Activated naive CD4-positive, alpha-beta T cell treated with anti-CD3 and anti-CD28 coated beads for 36 hours (primary cell): ENCODE measurements at regions of chr12 and their contacts with region 1.

Region 1: DNA sequence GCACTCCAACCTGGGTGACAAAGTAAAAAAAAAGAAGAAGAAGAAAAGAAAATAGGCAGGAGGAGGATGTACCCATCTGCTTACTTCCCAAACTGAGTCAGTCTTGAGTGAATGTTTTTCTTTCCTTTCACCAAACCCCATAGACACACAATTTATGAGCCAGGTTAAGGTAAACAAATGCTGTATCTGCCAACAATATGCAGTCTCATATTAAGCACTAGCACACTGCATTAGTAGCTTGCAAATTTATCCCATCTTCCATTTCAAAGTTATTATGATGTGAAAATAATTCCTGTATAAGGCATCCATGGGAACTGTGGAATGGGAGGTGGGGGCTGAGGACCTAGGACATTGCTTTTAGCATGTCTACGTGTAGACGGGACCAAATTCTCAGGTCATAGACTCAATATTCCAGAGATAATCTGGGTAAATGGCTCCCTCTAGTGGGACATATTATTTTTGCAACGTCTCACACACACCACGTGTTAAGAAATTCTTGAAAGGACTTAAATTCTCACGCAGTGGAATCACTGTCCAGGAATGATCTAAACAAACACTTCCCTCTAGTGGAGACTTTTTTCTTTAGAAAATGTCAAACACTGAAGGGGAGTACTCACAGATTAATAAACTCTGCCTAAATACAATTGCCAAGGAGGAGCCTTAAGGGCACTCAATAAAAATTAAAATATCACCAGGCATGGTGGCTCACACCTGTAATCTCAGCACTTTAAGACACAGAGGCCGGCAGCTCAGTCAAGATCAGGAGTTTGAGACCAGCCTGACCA is 17.1 kb upstream of the OR10P1 start:
- DNase-seq: peak; percentile 62
- H3K4me3 Mint-ChIP-seq: no peak overlapping the region
- H3K27ac Mint-ChIP-seq: no peak overlapping the region
- H3K4me1 Mint-ChIP-seq: peaks cover 10% of the 10 kb centered on the region
- H3K27me3 Mint-ChIP-seq: peaks cover 44% of the 10 kb centered on the region

Region 2: GRCh38 chr12:54865683-54866324 is 753.7 kb before region 1 on chr12:
- CTCF ChIA-PET with region 1: no interaction called
- intact Hi-C with region 1: loop called (anchors 10 kb)
- DNase-seq: peak; percentile 42
- H3K4me3 Mint-ChIP-seq: no peak overlapping the region
- H3K27ac Mint-ChIP-seq: no peak overlapping the region
- H3K4me1 Mint-ChIP-seq: peaks cover 36% of the 10 kb centered on the region
- H3K27me3 Mint-ChIP-seq: peaks cover 25% of the 10 kb centered on the region

Region 3: DNA sequence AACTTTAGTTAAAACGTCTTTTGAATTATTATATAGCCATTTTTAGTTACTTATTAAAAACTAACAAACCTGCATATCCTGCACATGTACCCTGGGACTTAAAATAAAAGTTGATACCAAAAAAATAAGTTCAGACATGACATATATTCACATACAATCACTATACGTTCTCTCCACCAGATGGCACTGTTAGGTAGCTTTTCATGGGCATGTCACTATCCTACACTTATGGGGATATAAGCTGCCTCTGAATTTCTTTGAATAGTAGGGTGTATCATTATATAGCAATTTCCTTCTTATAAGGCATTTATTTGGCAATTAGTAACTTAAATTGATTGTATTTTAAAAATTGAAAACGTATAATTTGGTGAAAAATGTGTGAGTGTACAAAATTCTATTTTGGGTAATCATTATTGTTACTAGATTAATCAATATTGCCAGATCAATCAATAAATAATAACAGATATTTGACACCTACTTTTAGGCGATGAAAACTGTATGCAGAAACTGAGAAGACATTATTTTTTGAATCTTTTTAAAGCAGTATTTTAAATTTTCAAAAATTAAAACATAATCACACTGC is 430.5 kb before region 1 on chr12:
- CTCF ChIA-PET with region 1: interaction called, 11 read pairs
- intact Hi-C with region 1: loop called (anchors 1 kb)
- DNase-seq: peak; percentile 70
- H3K4me3 Mint-ChIP-seq: no peak overlapping the region
- H3K27ac Mint-ChIP-seq: no peak overlapping the region
- H3K4me1 Mint-ChIP-seq: no peaks in the 10 kb centered on the region
- H3K27me3 Mint-ChIP-seq: peaks cover 22% of the 10 kb centered on the region

Region 4: GRCh38 chr12:55636116-55636655 is 16.6 kb after region 1 on chr12:
- CTCF ChIA-PET with region 1: interaction called, 4 read pairs
- intact Hi-C with region 1: loop called (anchors 1 kb)
- DNase-seq: peak; percentile 45
- H3K4me3 Mint-ChIP-seq: no peak overlapping the region
- H3K27ac Mint-ChIP-seq: no peak overlapping the region
- H3K4me1 Mint-ChIP-seq: peaks cover 11% of the 10 kb centered on the region
- H3K27me3 Mint-ChIP-seq: peaks cover 10% of the 10 kb centered on the region

Region 5: DNA sequence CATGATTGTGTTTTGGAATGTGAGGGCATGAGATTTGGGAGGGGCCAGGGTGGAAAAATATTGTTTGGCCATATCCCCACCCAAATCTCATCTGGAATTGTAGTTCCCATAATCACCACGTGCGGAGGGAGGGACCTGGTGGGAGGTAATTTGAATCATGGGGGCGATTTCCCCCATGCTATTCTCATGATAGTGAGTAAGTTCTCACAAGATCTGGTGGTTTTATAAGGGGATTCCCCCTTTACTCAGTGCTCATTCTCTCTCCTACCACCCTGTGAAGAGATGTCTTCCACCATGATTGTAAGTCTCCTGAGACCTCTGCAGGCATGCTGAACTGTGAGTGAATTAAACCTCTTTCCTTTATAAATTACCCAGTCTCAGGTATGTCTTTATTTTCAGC is 32.8 kb after region 1 on chr12:
- CTCF ChIA-PET with region 1: interaction called, 14 read pairs
- intact Hi-C with region 1: loop called (anchors 1 kb)
- DNase-seq: peak; percentile 61
- H3K4me3 Mint-ChIP-seq: no peak overlapping the region
- H3K27ac Mint-ChIP-seq: no peak overlapping the region
- H3K4me1 Mint-ChIP-seq: peaks cover 26% of the 10 kb centered on the region
- H3K27me3 Mint-ChIP-seq: no peaks in the 10 kb centered on the region

Region 6: DNA sequence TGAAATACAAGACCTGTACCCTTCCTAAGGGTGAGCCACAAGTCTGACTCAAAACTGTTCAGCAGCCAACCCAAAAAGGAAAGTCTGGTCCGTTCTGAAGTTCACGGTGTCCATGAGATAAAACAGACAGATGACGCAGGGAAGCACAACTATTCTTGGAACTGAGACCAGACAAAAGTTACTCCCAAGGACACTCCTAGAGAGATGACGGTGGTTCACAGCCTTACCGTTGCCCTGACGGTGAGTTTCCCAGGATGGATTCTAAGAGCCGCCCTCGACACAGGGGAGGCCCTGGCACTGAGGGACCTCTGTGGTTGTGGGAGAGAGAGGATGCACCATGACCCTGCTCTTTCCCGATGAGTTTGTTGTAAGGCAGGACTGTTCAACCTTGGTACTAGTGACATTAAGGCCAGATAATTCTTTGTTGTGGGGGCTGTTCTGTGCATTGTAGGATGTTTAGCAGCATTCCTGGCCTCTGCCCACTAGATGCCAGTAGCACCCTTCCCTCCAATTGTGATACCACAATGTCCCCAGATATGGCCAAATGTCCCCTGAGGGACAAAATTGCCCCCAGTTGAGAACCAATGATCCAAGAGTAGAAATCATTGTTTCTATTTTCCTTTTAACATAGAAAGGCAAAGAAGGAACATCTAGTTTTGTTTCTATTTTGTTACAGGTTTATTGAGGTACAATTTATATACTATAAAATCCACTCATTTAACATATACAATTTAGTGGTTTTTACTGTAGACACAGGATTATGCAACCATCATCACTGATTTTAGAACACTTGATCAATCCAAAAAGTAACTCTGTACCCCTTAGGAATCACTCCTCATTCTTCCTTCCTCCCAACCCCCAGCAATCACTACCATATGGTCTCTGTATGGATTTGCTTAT is 40.2 kb after region 1 on chr12:
- CTCF ChIA-PET with region 1: interaction called, 14 read pairs
- intact Hi-C with region 1: loop called (anchors 1 kb)
- DNase-seq: peak; percentile 29
- H3K4me3 Mint-ChIP-seq: no peak overlapping the region
- H3K27ac Mint-ChIP-seq: no peak overlapping the region
- H3K4me1 Mint-ChIP-seq: no peaks in the 10 kb centered on the region
- H3K27me3 Mint-ChIP-seq: no peaks in the 10 kb centered on the region

Region 7: DNA sequence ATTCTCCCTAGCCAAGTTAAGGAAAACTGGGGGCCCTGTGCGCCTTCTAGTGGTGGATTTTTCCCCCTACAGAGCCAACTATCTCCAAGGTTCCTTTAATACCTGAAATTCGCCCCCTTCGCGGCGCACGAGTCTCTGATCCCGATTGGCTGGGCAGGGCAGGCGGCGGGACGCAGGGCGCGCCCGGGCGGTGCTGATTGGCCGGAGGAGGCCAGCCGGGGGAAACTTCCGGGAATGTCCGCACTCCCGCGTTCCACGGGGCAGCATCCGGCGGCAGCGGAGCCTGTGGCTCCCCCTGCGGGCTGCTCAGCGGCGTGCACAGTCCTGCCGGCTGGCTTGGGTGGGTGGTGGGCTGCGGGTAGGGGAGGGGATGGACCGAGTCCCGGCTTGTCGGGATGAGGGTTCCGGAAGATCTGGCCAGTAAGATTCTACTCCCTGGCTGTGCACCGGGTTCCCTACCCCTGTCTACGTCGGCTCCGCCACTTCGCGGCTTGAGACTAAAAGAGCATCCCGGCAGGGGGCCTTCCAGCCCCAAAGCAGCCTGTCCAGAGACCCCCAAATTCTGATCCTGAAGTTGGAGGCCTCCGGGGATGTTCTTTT is 604.7 kb after region 1 on chr12 and contains the start of gene NABP2:
- CTCF ChIA-PET with region 1: no interaction called
- intact Hi-C with region 1: no loop called
- DNase-seq: peak; percentile 97
- H3K4me3 Mint-ChIP-seq: peak within 1 kb of the TSS; percentile 99
- H3K27ac Mint-ChIP-seq: peak within 1 kb of the TSS; percentile 93
- H3K4me1 Mint-ChIP-seq: peaks cover 37% of the 10 kb centered on the region
- H3K27me3 Mint-ChIP-seq: no peaks in the 10 kb centered on the region
- total RNA-seq, gene NABP2: 57.4 to 59.0 TPM